ENCODE measurements at regions of chr6 and their contacts with region 1.

Region 1: DNA sequence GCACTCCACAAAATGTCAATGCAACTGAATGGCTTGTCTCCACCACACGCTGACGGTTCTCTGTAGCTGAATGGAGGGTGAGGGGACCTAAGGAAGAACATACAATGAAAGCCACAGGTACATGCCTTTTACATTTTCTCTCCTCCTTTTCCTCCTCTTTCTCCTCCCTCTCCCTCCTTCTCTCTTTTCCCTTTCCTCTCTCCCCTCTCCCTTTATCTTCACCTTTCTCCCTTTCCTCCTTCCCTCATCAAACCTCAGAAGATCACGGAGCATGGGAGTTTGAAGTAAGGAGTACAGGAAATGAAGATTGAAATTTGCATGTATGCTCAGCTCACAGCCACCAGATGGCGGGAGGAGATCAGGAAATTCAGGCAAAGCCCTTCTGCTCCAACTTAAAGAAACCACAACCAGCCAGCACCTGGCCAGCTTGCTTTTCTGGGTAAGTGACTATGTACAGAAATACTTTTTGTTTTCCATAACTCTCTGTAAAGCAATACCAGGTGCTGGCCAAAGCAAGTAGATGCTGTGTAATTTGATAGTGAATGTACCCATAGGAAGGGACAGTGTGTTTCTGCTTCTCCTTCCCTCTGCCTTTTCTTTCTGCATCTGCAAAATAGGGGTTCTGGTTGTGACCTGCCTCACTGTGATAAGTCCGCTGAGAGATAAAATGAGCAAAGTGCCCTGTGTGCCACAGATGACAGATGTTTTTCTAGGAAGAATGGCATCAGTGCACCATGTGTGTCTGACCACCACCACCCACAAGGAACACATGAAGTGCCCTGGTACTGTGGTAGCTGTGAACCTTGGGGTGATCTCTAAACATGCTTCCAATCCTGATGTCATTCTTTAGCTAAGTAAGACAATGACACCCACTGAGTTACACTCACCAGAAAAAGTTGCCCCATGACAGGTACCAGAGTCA is 18.6 kb upstream of the FOXO3 start:
- DNase-seq: peak; percentile 81 to 94
- H3K4me3 ChIP-seq: peak overlapping the region in 2 of 4 donors; percentile 5 to 18
- H3K27ac ChIP-seq: peak overlapping the region in 4 of 5 donors; percentile 27 to 50 (median 38)
- H3K4me1 ChIP-seq: peaks cover 0 to 21% (median 5%) of the 10 kb centered on the region in 4 donors
- H3K27me3 ChIP-seq: no peaks in the 10 kb centered on the region
- CTCF ChIP-seq: peak in 5 of 7 experiments; percentile 57 to 98 (median 85)
- EP300 ChIP-seq: no peak
- POLR2A ChIP-seq: no peak

Region 2: GRCh38 chr6:108831104-108831503 is 289.0 kb after region 1 on chr6:
- intact Hi-C with region 1: loop called (anchors 5 kb)
- DNase-seq: peak in 1 of 2 donors; percentile 45
- H3K4me3 ChIP-seq: no peak overlapping the region
- H3K27ac ChIP-seq: peak overlapping the region in 1 of 5 donors; percentile 2
- H3K4me1 ChIP-seq: no peaks in the 10 kb centered on the region
- H3K27me3 ChIP-seq: no peaks in the 10 kb centered on the region
- CTCF ChIP-seq: no peak
- EP300 ChIP-seq: no peak
- POLR2A ChIP-seq: no peak

Region 3: GRCh38 chr6:108896111-108896661 is 354.1 kb after region 1 on chr6:
- intact Hi-C with region 1: loop called (anchors 5 kb)
- DNase-seq: peak in 1 of 2 donors; percentile 48
- H3K4me3 ChIP-seq: no peak overlapping the region
- H3K27ac ChIP-seq: peak overlapping the region; percentile 35 to 77 (median 63)
- H3K4me1 ChIP-seq: peaks cover 10 to 43% (median 32%) of the 10 kb centered on the region in 4 donors
- H3K27me3 ChIP-seq: no peaks in the 10 kb centered on the region
- CTCF ChIP-seq: no peak
- EP300 ChIP-seq: no peak
- POLR2A ChIP-seq: no peak

Region 4: DNA sequence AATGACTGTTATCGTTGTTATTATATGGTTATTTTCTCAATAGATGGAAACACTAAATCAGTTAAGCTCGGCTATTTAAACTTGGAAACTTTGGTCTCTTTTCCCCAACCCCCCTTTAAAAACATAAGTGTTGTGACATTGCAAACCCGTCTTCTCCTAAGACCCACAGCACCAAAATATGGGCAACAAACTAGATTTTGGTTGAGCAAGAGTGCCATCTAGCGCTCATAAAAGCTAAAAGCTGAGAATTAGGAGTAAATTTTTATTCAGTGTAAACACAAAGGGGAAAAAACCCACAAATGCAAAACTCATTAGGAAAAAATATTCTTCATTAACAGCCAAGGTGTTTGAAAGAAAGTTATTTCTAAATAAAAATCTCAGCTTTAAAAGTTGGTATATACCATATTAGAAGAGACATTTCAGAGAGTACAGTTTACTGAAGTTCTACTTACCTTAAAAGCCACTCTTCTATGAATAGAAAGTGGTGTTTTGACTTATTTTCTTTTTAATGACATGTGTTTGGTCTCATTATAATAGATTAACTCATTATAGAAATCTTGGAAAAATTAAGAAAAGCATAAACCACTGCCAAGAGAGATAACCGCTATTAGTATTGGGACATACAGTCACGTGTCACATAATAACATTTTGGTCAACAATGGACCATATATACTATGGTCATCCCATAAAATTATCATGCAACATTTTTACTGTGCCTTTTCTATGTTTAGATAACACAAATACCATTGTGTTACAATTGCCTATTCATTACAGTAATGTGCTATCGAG is 531.4 kb after region 1 on chr6:
- intact Hi-C with region 1: loop called (anchors 10 kb)
- DNase-seq: peak in 1 of 2 donors; percentile 88
- H3K4me3 ChIP-seq: no peak overlapping the region
- H3K27ac ChIP-seq: no peak overlapping the region
- H3K4me1 ChIP-seq: peaks cover 4 to 35% (median 26%) of the 10 kb centered on the region in 4 donors
- H3K27me3 ChIP-seq: no peaks in the 10 kb centered on the region
- CTCF ChIP-seq: peak in 5 of 7 experiments; percentile 25 to 59 (median 55)
- EP300 ChIP-seq: no peak
- POLR2A ChIP-seq: no peak